ENCODE measurements at regions of chr2 and their contacts with region 1.

Region 1: DNA sequence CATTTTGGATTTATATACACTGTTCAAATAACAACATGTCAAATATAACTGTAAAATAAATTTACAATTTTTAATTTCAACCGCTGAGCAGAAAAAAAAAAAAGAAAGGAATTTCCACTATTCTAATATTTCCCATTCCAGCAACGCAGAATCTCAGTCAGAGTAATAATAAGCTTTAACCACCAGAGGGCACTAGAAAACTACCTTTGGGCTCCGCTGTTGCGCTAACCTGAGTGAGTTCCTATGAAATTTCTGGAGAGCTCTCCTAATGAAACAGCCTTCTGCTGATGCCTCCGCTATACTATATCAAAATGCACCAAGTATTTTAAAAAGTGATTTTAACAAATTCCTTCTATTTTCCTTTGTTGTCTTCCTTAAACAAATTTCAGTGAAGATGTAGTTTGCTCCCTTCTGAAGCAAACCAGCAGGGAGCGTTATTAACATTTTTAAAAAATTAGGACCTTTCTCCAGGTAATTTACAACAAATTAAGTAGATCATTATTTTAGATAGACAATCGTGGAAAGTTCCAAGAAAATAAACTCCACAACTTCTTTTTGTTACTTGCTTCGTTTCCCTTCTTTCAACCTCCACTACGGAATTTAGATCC is 23.0 kb downstream of the ERMN start:
- DNase-seq: peak; percentile 21
- ATAC-seq: peak; percentile 82
- H3K4me3 ChIP-seq: no peak overlapping the region
- H3K27ac ChIP-seq: no peak overlapping the region
- H3K4me1 ChIP-seq: no peaks in the 10 kb centered on the region
- H3K27me3 ChIP-seq: peaks cover 0 to 2% of the 10 kb centered on the region in 2 experiments; a peak in 2 of 4 replicates
- CTCF ChIP-seq: peak; percentile 55 to 71 (median 62)
- EP300 ChIP-seq: no peak
- POLR2A ChIP-seq: no peak
- RAD21 ChIP-seq: peak; percentile 93

Region 2: GRCh38 chr2:156192468-156192867 is 1110.1 kb before region 1 on chr2:
- CTCF ChIA-PET with region 1: no interaction called
- POLR2A ChIA-PET with region 1: no interaction called
- RAD21 ChIA-PET with region 1: no interaction called
- SMC1A ChIA-PET with region 1: no interaction called
- in situ Hi-C with region 1: no loop called
- intact Hi-C with region 1: no loop called
- DNase-seq: peak; percentile 3
- ATAC-seq: peak; percentile 83
- H3K4me3 ChIP-seq: no peak overlapping the region
- H3K27ac ChIP-seq: no peak overlapping the region
- H3K4me1 ChIP-seq: no peaks in the 10 kb centered on the region
- H3K27me3 ChIP-seq: no peaks in the 10 kb centered on the region
- CTCF ChIP-seq: peak in 2 of 3 experiments; percentile 18 to 28; a peak in 3 of 6 replicates
- EP300 ChIP-seq: no peak
- POLR2A ChIP-seq: no peak
- RAD21 ChIP-seq: peak; percentile 53

Region 3: GRCh38 chr2:156748221-156748620 is 554.4 kb before region 1 on chr2:
- CTCF ChIA-PET with region 1: no interaction called
- POLR2A ChIA-PET with region 1: no interaction called
- RAD21 ChIA-PET with region 1: no interaction called
- SMC1A ChIA-PET with region 1: no interaction called
- in situ Hi-C with region 1: no loop called
- intact Hi-C with region 1: no loop called
- DNase-seq: no peak
- ATAC-seq: no peak
- H3K4me3 ChIP-seq: no peak overlapping the region
- H3K27ac ChIP-seq: no peak overlapping the region
- H3K4me1 ChIP-seq: no peaks in the 10 kb centered on the region
- H3K27me3 ChIP-seq: no peaks in the 10 kb centered on the region
- CTCF ChIP-seq: no peak
- EP300 ChIP-seq: no peak
- POLR2A ChIP-seq: no peak
- RAD21 ChIP-seq: no peak

Region 4: GRCh38 chr2:157124731-157125130 is 177.9 kb before region 1 on chr2:
- CTCF ChIA-PET with region 1: no interaction called
- POLR2A ChIA-PET with region 1: no interaction called
- RAD21 ChIA-PET with region 1: no interaction called
- SMC1A ChIA-PET with region 1: no interaction called
- in situ Hi-C with region 1: no loop called
- intact Hi-C with region 1: no loop called
- DNase-seq: no peak
- ATAC-seq: no peak
- H3K4me3 ChIP-seq: no peak overlapping the region
- H3K27ac ChIP-seq: no peak overlapping the region
- H3K4me1 ChIP-seq: no peaks in the 10 kb centered on the region
- H3K27me3 ChIP-seq: peaks cover 0 to 2% of the 10 kb centered on the region in 2 experiments; a peak in 2 of 4 replicates
- CTCF ChIP-seq: no peak
- EP300 ChIP-seq: no peak
- POLR2A ChIP-seq: no peak
- RAD21 ChIP-seq: no peak

Region 5: DNA sequence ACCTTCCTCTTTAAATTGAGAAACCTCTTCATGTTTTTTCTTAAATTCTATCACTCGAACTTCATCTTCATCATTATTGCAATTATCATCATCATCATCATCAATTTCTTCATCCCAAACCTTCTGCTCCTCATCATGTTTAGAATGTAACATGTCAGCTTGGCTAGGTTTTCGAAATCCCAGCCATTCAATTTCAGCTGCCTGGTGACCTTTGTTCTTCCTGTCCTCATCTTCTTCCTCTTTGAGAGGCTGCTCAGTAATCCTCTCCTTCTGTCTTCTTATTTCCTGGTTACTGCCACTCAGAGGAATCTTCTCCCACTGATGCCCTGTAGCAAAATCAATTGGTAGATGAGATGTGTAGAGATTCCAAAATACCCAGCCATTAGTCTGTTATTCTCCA is 18.9 kb after region 1 on chr2:
- CTCF ChIA-PET with region 1: interaction called, 226 read pairs
- POLR2A ChIA-PET with region 1: no interaction called
- RAD21 ChIA-PET with region 1: interaction called, 126 read pairs
- SMC1A ChIA-PET with region 1: interaction called, 138 read pairs
- in situ Hi-C with region 1: no loop called
- intact Hi-C with region 1: no loop called
- DNase-seq: no peak
- ATAC-seq: no peak
- H3K4me3 ChIP-seq: no peak overlapping the region
- H3K27ac ChIP-seq: no peak overlapping the region
- H3K4me1 ChIP-seq: no peaks in the 10 kb centered on the region
- H3K27me3 ChIP-seq: no peaks in the 10 kb centered on the region
- CTCF ChIP-seq: no peak
- EP300 ChIP-seq: no peak
- POLR2A ChIP-seq: no peak
- RAD21 ChIP-seq: no peak

Region 6: DNA sequence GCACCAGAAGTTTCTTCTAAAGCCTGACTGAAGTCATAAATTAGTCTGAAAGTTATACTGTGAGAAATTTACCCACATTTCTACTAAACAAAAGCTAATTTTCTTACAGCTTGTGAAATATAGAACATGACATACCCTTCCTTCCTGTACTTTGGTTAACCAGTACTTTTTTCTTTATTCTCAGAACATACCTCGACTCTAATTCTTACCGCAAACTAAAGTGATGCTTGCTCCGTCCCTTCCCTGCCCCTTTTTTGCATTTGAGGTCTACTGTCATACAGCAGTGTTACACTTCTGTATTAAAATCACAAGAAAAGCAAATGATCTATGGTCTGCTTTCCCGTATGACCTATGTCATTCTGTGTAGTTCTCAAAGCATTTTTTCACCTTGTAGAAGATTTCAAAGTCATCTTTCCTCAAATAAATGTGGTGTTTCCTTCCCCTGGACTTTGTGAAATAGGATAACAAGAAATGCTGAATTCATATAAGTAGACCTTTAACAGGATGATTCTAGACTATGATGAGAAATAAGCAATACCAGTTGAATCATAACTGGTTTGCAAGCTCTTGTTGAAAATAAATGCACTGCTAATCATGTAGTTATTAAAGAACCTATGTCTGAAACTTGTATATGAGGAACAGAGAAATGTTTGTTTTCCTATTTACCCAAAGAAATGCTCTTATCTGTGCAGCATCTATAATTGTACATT is 110.9 kb after region 1 on chr2:
- CTCF ChIA-PET with region 1: interaction called, 3 read pairs
- POLR2A ChIA-PET with region 1: no interaction called
- RAD21 ChIA-PET with region 1: interaction called, 4 read pairs
- SMC1A ChIA-PET with region 1: interaction called, 19 read pairs
- in situ Hi-C with region 1: no loop called
- intact Hi-C with region 1: no loop called
- DNase-seq: peak; percentile 97
- ATAC-seq: peak; percentile 87
- H3K4me3 ChIP-seq: no peak overlapping the region
- H3K27ac ChIP-seq: peak overlapping the region; percentile 86
- H3K4me1 ChIP-seq: peaks cover 38% of the 10 kb centered on the region
- H3K27me3 ChIP-seq: no peaks in the 10 kb centered on the region
- CTCF ChIP-seq: no peak
- EP300 ChIP-seq: peak; percentile 71 to 74; a peak in 2 of 4 replicates
- POLR2A ChIP-seq: peak; percentile 18; the same call in 1 of the 2 replicates
- RAD21 ChIP-seq: peak; percentile 37

Region 7: GRCh38 chr2:157492189-157492773 is 189.7 kb after region 1 on chr2:
- CTCF ChIA-PET with region 1: interaction called, 174 read pairs
- POLR2A ChIA-PET with region 1: interaction called, 4 read pairs
- RAD21 ChIA-PET with region 1: interaction called, 81 read pairs
- SMC1A ChIA-PET with region 1: interaction called, 155 read pairs
- in situ Hi-C with region 1: no loop called
- intact Hi-C with region 1: loop called (anchors 2 kb)
- DNase-seq: peak; percentile 43
- ATAC-seq: peak; percentile 98
- H3K4me3 ChIP-seq: no peak overlapping the region
- H3K27ac ChIP-seq: no peak overlapping the region
- H3K4me1 ChIP-seq: no peaks in the 10 kb centered on the region
- H3K27me3 ChIP-seq: no peaks in the 10 kb centered on the region
- CTCF ChIP-seq: peak; percentile 79 to 93 (median 82); a peak in 5 of 6 replicates
- EP300 ChIP-seq: no peak
- POLR2A ChIP-seq: no peak
- RAD21 ChIP-seq: peak; percentile 89

Region 8: DNA sequence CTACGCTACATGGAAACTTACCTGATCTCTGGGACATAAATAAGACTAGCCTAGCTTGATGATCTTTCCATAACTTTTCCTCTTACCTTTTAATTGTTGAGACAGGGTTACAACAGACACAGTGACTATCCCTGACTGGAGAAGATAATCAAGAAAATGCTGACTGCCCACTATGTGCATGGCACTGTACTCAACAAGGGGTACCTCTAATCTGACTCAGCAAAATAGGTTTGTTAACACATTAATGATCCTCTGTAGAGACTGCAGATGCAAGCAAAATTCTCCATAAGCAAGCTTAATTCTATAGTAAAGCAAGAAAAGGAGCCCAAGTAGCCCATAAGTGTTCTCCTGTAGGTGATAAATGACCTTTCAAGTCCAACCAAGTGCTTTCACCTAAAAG is 300.6 kb after region 1 on chr2:
- CTCF ChIA-PET with region 1: interaction called, 90 read pairs
- POLR2A ChIA-PET with region 1: no interaction called
- RAD21 ChIA-PET with region 1: interaction called, 8 read pairs
- SMC1A ChIA-PET with region 1: interaction called, 16 read pairs
- in situ Hi-C with region 1: loop called (anchors 5 kb)
- intact Hi-C with region 1: no loop called
- DNase-seq: no peak
- ATAC-seq: no peak
- H3K4me3 ChIP-seq: no peak overlapping the region
- H3K27ac ChIP-seq: no peak overlapping the region
- H3K4me1 ChIP-seq: no peaks in the 10 kb centered on the region
- H3K27me3 ChIP-seq: no peaks in the 10 kb centered on the region
- CTCF ChIP-seq: no peak
- EP300 ChIP-seq: no peak
- POLR2A ChIP-seq: no peak
- RAD21 ChIP-seq: no peak

Region 9: GRCh38 chr2:158024288-158024898 is 721.8 kb after region 1 on chr2:
- CTCF ChIA-PET with region 1: interaction called, 26 read pairs
- POLR2A ChIA-PET with region 1: no interaction called
- RAD21 ChIA-PET with region 1: interaction called, 7 read pairs
- SMC1A ChIA-PET with region 1: interaction called, 18 read pairs
- in situ Hi-C with region 1: no loop called
- intact Hi-C with region 1: no loop called
- DNase-seq: no peak
- ATAC-seq: peak; percentile 86
- H3K4me3 ChIP-seq: no peak overlapping the region
- H3K27ac ChIP-seq: no peak overlapping the region
- H3K4me1 ChIP-seq: no peaks in the 10 kb centered on the region
- H3K27me3 ChIP-seq: no peaks in the 10 kb centered on the region
- CTCF ChIP-seq: peak; percentile 74 to 76 (median 75)
- EP300 ChIP-seq: no peak
- POLR2A ChIP-seq: no peak
- RAD21 ChIP-seq: peak; percentile 75